T-cell (primary cell): ENCODE measurements at regions of chr20 and their contacts with region 1.

Region 1: GRCh38 chr20:23061734-23062561 is 12.5 kb upstream of the THBD start:
- DNase-seq: no peak
- ATAC-seq: no peak
- H3K4me3 ChIP-seq: no peak overlapping the region
- H3K4me3 Mint-ChIP-seq: no peak overlapping the region
- H3K27ac ChIP-seq: no peak overlapping the region
- H3K27ac Mint-ChIP-seq: no peak overlapping the region
- H3K4me1 ChIP-seq: no peaks in the 10 kb centered on the region
- H3K4me1 Mint-ChIP-seq: no peaks in the 10 kb centered on the region
- H3K27me3 ChIP-seq: peaks cover 0 to 11% of the 10 kb centered on the region in 2 experiments
- H3K27me3 Mint-ChIP-seq: peaks cover 0 to 7% of the 10 kb centered on the region in 2 donors

Region 2: DNA sequence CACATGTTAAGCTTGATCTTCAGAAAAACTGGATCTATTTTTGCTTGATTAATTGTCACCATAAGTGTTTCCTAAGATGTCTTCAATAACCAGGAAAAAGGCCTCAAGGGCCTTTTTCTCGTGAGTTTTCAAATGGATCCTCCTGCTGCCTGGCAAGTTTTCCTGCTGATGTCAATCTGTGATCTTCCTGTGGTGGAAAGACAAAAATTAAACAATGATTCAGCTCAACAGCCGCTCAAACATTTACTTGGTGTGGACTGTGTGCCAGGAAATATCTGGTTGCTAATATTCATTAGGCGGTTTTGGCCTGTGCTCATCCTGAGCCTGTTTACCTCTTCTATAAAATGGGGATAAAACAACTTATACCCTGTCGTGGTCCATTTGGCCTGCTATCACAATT is 62.2 kb before region 1 on chr20:
- CTCF ChIA-PET with region 1: no interaction called
- POLR2A ChIA-PET with region 1: no interaction called
- DNase-seq: no peak
- ATAC-seq: no peak
- H3K4me3 ChIP-seq: no peak overlapping the region
- H3K4me3 Mint-ChIP-seq: no peak overlapping the region
- H3K27ac ChIP-seq: no peak overlapping the region
- H3K27ac Mint-ChIP-seq: no peak overlapping the region
- H3K4me1 ChIP-seq: no peaks in the 10 kb centered on the region
- H3K4me1 Mint-ChIP-seq: no peaks in the 10 kb centered on the region
- H3K27me3 ChIP-seq: peaks cover 0 to 6% of the 10 kb centered on the region in 2 experiments
- H3K27me3 Mint-ChIP-seq: no peaks in the 10 kb centered on the region

Region 3: GRCh38 chr20:23099791-23100698 is 38.1 kb after region 1 on chr20:
- CTCF ChIA-PET with region 1: interaction called in 1 of 2 experiments, 10 read pairs
- POLR2A ChIA-PET with region 1: no interaction called
- DNase-seq: no peak
- ATAC-seq: no peak
- H3K4me3 ChIP-seq: no peak overlapping the region
- H3K4me3 Mint-ChIP-seq: no peak overlapping the region
- H3K27ac ChIP-seq: no peak overlapping the region
- H3K27ac Mint-ChIP-seq: no peak overlapping the region
- H3K4me1 ChIP-seq: no peaks in the 10 kb centered on the region
- H3K4me1 Mint-ChIP-seq: no peaks in the 10 kb centered on the region
- H3K27me3 ChIP-seq: peaks cover 0 to 7% of the 10 kb centered on the region in 2 experiments
- H3K27me3 Mint-ChIP-seq: peaks cover 3 to 5% of the 10 kb centered on the region in 2 donors